GM12878 (cell line): ENCODE measurements at regions of chr17 and their contacts with region 1.

Region 1: GRCh38 chr17:8173056-8173870 is 2.9 kb downstream of the TMEM107 start:
- DNase-seq: peak; percentile 98
- ATAC-seq: peak; percentile 86
- H3K4me3 ChIP-seq: peak overlapping the region; percentile 65
- H3K27ac ChIP-seq: peak overlapping the region; percentile 99
- H3K4me1 ChIP-seq: peaks cover 14% of the 10 kb centered on the region
- H3K27me3 ChIP-seq: no peaks in the 10 kb centered on the region
- CTCF ChIP-seq: no peak
- EP300 ChIP-seq: peak in 1 of 2 experiments; percentile 59; a peak in 2 of 4 replicates
- POLR2A ChIP-seq: peak; percentile 99
- RAD21 ChIP-seq: no peak

Region 2: DNA sequence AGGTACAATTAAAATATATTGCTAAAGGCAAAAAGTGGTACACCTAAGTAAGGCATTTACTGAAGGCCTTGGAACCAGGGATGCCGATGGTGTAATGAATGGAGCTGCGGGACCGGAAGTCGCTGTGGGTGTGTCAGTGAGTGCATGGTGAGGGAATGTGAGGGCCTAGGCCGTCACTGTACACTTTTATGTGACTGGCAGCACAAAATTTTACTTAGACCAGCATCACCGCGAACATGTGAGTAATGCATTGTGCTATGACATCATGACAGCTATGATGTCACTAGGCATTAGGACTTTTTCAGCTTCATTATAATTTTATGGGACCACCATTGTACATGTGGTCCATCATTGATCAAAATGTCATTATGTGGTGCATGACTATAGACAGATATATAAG is 119.7 kb before region 1 on chr17:
- CTCF ChIA-PET with region 1: no interaction called
- POLR2A ChIA-PET with region 1: no interaction called
- RAD21 ChIA-PET with region 1: no interaction called
- SMC1A ChIA-PET with region 1: no interaction called
- in situ Hi-C with region 1: no loop called
- intact Hi-C with region 1: no loop called
- DNase-seq: no peak
- ATAC-seq: no peak
- H3K4me3 ChIP-seq: no peak overlapping the region
- H3K27ac ChIP-seq: no peak overlapping the region
- H3K4me1 ChIP-seq: peaks cover 14% of the 10 kb centered on the region
- H3K27me3 ChIP-seq: peaks cover 0 to 4% of the 10 kb centered on the region in 2 experiments; a peak in 1 of 4 replicates
- CTCF ChIP-seq: no peak
- EP300 ChIP-seq: no peak
- POLR2A ChIP-seq: no peak
- RAD21 ChIP-seq: no peak

Region 3: DNA sequence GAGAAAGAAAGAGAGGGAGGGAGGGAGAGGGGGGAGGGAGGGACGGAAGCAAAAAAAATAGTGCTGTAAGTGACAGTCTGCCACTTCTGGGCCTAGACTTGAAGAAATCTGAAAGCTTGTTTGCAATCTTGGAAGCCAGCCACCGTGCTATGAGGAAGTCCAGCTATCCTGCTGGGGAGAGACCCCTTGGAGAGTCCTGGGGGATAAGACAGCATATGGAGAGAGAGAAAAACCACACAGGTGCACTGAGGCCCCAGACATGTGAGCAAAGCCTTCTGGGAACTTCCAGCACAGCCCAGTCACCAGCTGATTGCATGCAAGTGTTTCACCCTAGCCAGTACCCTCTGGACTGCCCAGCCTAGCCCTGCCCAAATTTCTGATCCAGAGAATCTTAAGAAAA is 73.2 kb before region 1 on chr17:
- CTCF ChIA-PET with region 1: no interaction called
- POLR2A ChIA-PET with region 1: no interaction called
- RAD21 ChIA-PET with region 1: no interaction called
- SMC1A ChIA-PET with region 1: no interaction called
- in situ Hi-C with region 1: no loop called
- intact Hi-C with region 1: no loop called
- DNase-seq: no peak
- ATAC-seq: no peak
- H3K4me3 ChIP-seq: no peak overlapping the region
- H3K27ac ChIP-seq: no peak overlapping the region
- H3K4me1 ChIP-seq: no peaks in the 10 kb centered on the region
- H3K27me3 ChIP-seq: no peaks in the 10 kb centered on the region; a peak in 1 of 4 replicates
- CTCF ChIP-seq: no peak
- EP300 ChIP-seq: no peak
- POLR2A ChIP-seq: no peak
- RAD21 ChIP-seq: no peak

Region 4: DNA sequence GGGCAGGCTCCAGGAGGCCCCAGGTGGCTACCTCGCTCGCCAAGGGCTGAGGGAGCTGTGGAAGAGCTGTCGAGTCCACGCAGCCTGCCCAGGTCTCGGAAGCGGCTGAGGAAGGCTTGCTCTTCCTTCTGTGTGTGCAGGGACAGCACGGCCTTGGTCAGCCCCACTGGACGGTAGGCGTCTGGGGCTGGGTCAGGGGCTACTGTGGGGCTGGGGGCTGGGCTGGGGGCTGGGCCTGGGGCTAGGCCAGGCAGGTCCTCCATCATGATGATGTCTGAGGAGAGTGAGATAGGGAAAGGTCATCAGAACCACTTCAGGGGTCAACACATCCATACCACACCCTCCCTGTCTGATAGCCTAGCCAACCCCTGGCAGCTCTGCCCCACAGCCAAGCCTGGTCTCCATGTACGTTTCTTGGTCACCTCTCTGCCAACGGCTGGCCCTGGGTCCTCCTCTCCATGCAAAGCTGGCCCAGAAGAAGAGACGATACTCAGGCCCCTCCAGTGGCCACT is 28.5 kb before region 1 on chr17:
- CTCF ChIA-PET with region 1: no interaction called
- POLR2A ChIA-PET with region 1: no interaction called
- RAD21 ChIA-PET with region 1: no interaction called
- SMC1A ChIA-PET with region 1: no interaction called
- in situ Hi-C with region 1: no loop called
- intact Hi-C with region 1: no loop called
- DNase-seq: no peak
- ATAC-seq: no peak
- H3K4me3 ChIP-seq: no peak overlapping the region
- H3K27ac ChIP-seq: no peak overlapping the region
- H3K4me1 ChIP-seq: no peaks in the 10 kb centered on the region
- H3K27me3 ChIP-seq: no peaks in the 10 kb centered on the region
- CTCF ChIP-seq: no peak
- EP300 ChIP-seq: no peak
- POLR2A ChIP-seq: no peak
- RAD21 ChIP-seq: no peak

Region 5: DNA sequence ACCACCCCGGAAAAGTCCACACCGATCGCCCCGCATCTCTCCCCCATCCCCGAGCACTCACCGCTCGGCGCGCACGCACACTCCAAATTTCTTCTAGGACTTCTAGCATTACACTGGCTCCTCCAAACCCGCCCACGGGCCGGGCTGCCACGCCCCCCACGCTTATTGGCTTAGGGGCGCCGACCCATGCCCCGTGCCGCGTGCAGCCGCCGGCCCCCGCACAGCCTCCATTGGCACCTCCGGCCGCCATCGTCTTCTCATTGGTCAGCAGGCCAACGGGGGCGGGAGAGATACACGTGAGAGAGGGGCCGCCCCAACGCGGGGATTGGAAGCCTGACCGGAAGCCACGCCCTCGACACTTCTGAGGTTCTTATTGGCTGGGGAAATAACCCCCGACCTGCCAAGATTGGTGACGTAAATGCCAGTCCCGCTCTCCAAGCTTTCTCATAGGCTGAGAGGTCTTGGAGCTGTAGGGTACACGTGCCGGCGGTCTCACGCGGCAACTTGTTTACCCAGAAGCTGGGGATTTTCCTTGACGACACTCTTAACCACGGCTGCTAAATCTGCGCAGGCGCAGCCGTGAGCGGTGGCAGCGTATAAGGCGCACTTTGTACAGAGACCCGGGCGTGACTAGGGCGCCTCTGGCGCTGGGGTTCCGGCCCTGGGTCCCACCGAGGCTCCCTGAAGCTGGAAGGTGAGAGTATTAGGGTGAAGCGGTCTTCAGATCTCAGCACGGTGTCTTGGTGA is 16.8 kb before region 1 on chr17:
- CTCF ChIA-PET with region 1: interaction called, 9 read pairs
- POLR2A ChIA-PET with region 1: interaction called, 22 read pairs
- RAD21 ChIA-PET with region 1: interaction called, 11 read pairs
- SMC1A ChIA-PET with region 1: interaction called, 7 read pairs
- in situ Hi-C with region 1: no loop called
- intact Hi-C with region 1: no loop called
- DNase-seq: peak; percentile 100
- ATAC-seq: peak; percentile 83
- H3K4me3 ChIP-seq: peak overlapping the region; percentile 86
- H3K27ac ChIP-seq: peak overlapping the region; percentile 94
- H3K4me1 ChIP-seq: peaks cover 21% of the 10 kb centered on the region
- H3K27me3 ChIP-seq: no peaks in the 10 kb centered on the region
- CTCF ChIP-seq: peak in 1 of 3 experiments; percentile 23; a peak in 1 of 6 replicates
- EP300 ChIP-seq: peak; percentile 0 to 53; a peak in 3 of 4 replicates
- POLR2A ChIP-seq: peak; percentile 87
- RAD21 ChIP-seq: no peak

Region 6: GRCh38 chr17:8162233-8162996 is 10.8 kb before region 1 on chr17 and contains the start of gene VAMP2:
- CTCF ChIA-PET with region 1: interaction called, 9 read pairs
- POLR2A ChIA-PET with region 1: interaction called, 22 read pairs
- RAD21 ChIA-PET with region 1: interaction called, 11 read pairs
- SMC1A ChIA-PET with region 1: interaction called, 7 read pairs
- in situ Hi-C with region 1: no loop called
- intact Hi-C with region 1: no loop called
- DNase-seq: no peak
- ATAC-seq: peak; percentile 69
- H3K4me3 ChIP-seq: peak within 1 kb of the TSS; percentile 95
- H3K27ac ChIP-seq: peak within 1 kb of the TSS; percentile 87
- H3K4me1 ChIP-seq: peaks cover 33% of the 10 kb centered on the region
- H3K27me3 ChIP-seq: no peaks in the 10 kb centered on the region
- CTCF ChIP-seq: no peak
- EP300 ChIP-seq: no peak
- POLR2A ChIP-seq: peak; percentile 93
- RAD21 ChIP-seq: no peak
- polyA plus RNA-seq, gene VAMP2: 3.0 to 6.3 TPM